GM10248 (cell line): ENCODE measurements at regions of chr18 and their contacts with region 1.

Region 1: DNA sequence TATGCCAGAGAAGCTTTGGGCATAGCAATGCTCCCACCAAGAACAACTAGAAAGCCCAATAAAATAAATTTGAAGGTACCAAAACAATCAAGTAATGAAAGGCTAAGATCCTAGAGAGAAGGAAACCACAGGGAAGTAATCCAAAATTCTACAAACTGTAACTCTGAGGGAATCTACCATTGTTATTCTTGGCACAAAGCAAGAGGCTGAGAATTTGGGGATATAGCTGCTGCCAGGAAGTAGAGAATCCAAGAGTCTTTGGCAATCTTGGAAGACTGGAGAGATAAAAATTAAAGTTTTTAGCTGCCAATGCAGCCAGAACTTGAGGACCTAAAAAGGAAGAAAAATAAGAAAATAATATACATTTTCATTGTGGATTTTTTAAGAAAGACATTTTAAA is 68.5 kb downstream of the PIGN start:
- DNase-seq: no peak
- CTCF ChIP-seq: no peak

Region 2: GRCh38 chr18:62088156-62088555 is 30.2 kb before region 1 on chr18:
- CTCF ChIA-PET with region 1: no interaction called
- POLR2A ChIA-PET with region 1: no interaction called
- DNase-seq: no peak
- CTCF ChIP-seq: no peak

Region 3: GRCh38 chr18:62102221-62102620 is 16.1 kb before region 1 on chr18:
- CTCF ChIA-PET with region 1: interaction called, 11 read pairs
- POLR2A ChIA-PET with region 1: no interaction called
- DNase-seq: peak; percentile 13
- CTCF ChIP-seq: no peak